ENCODE measurements at regions of chr1 and their contacts with region 1.

Region 1: GRCh38 chr1:155017041-155017945 is 14.7 kb downstream of the ZBTB7B start:
- DNase-seq: peak; percentile 71 to 92 (median 88)
- ATAC-seq: peak; percentile 98
- H3K4me3 ChIP-seq: peak overlapping the region; percentile 31 to 46
- H3K4me3 Mint-ChIP-seq: peak overlapping the region; percentile 59
- H3K27ac ChIP-seq: no peak overlapping the region
- H3K27ac Mint-ChIP-seq: no peak overlapping the region
- H3K4me1 ChIP-seq: peaks cover 55% of the 10 kb centered on the region
- H3K4me1 Mint-ChIP-seq: peaks cover 44% of the 10 kb centered on the region
- H3K27me3 ChIP-seq: no peaks in the 10 kb centered on the region
- H3K27me3 Mint-ChIP-seq: no peaks in the 10 kb centered on the region
- CTCF ChIP-seq: peak; percentile 99

Region 2: GRCh38 chr1:154669464-154670282 is 347.6 kb before region 1 on chr1:
- CTCF ChIA-PET with region 1: interaction called, 3 read pairs
- POLR2A ChIA-PET with region 1: no interaction called
- intact Hi-C with region 1: loop called (anchors 1 to 5 kb)
- DNase-seq: peak; percentile 48 to 86 (median 74)
- ATAC-seq: peak; percentile 100
- H3K4me3 ChIP-seq: no peak overlapping the region
- H3K4me3 Mint-ChIP-seq: no peak overlapping the region
- H3K27ac ChIP-seq: no peak overlapping the region
- H3K27ac Mint-ChIP-seq: no peak overlapping the region
- H3K4me1 ChIP-seq: peaks cover 3% of the 10 kb centered on the region
- H3K4me1 Mint-ChIP-seq: no peaks in the 10 kb centered on the region
- H3K27me3 ChIP-seq: no peaks in the 10 kb centered on the region
- H3K27me3 Mint-ChIP-seq: no peaks in the 10 kb centered on the region
- CTCF ChIP-seq: peak; percentile 80

Region 3: DNA sequence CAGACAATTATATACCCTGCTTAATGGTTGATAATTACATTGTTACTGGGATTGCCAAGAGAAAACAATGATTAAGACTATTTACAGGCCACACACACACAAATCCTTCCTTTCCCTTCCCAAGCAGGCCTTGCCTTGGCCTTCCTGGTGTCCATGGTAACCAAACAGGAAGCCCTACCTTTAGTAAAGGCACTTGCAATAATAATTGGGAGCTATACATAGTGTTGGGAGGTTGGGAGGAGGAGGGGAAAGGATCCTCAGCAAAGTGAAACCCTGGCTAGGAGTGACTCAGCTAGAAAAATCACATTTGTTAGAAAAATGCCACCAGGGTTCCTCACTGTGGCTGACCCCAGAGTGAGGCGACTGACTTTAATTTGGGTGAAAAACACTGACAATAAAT is 287.0 kb before region 1 on chr1:
- CTCF ChIA-PET with region 1: no interaction called
- POLR2A ChIA-PET with region 1: no interaction called
- intact Hi-C with region 1: no loop called
- DNase-seq: no peak
- ATAC-seq: no peak
- H3K4me3 ChIP-seq: no peak overlapping the region
- H3K4me3 Mint-ChIP-seq: no peak overlapping the region
- H3K27ac ChIP-seq: no peak overlapping the region
- H3K27ac Mint-ChIP-seq: no peak overlapping the region
- H3K4me1 ChIP-seq: no peaks in the 10 kb centered on the region
- H3K4me1 Mint-ChIP-seq: no peaks in the 10 kb centered on the region
- H3K27me3 ChIP-seq: no peaks in the 10 kb centered on the region
- H3K27me3 Mint-ChIP-seq: peaks cover 7% of the 10 kb centered on the region
- CTCF ChIP-seq: no peak

Region 4: DNA sequence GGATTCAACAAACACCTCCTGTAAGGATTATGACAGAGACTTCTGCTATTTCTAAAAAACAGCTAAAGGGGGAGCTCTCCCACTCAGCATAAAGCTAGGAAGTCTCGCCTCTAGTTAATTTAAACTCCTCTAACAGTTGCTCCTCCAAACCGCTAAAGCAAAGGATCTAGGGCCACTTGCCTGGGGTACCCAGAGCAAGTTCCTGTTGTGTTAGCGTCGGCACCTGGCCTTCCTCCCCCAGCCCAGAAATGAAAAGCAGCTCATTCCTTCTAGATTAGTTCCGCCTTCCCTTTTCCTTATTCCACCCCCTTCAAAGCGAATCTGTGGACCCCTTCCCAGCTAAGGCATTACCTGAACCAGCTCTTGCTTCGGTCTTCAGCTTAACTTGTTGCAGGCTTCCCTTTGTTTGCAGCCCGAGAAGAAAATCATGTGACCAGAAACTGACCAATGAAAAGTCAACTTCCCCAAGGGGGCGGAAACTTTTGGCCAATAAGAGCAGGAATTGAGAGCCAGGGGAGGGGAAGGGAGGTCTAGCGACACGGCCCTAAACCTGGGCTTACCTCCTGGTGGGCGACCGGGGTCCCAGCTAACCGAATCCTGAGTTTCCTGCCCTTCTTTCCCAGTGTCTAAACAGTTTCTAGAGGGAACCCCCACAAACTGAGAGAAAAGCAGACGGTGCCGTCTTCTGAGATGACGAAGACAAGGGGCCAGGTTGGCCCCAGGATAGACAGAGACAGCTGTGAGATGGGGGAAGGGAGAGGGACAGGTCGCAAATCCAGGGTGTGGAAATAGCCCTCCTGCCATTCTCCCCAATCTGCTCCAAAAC is 61.4 kb before region 1 on chr1 and contains the start of gene PBXIP1:
- CTCF ChIA-PET with region 1: interaction called, 109 read pairs
- POLR2A ChIA-PET with region 1: interaction called, 24 read pairs
- intact Hi-C with region 1: loop called in 1 of 2 experiments (anchors 1 kb)
- DNase-seq: peak; percentile 65 to 96 (median 84)
- ATAC-seq: peak; percentile 40
- H3K4me3 ChIP-seq: peak within 1 kb of the TSS; percentile 71 to 76
- H3K4me3 Mint-ChIP-seq: peak within 1 kb of the TSS; percentile 99
- H3K27ac ChIP-seq: peak within 1 kb of the TSS; percentile 98
- H3K27ac Mint-ChIP-seq: peak within 1 kb of the TSS; percentile 99
- H3K4me1 ChIP-seq: peaks cover 60% of the 10 kb centered on the region
- H3K4me1 Mint-ChIP-seq: peaks cover 76% of the 10 kb centered on the region
- H3K27me3 ChIP-seq: no peaks in the 10 kb centered on the region
- H3K27me3 Mint-ChIP-seq: no peaks in the 10 kb centered on the region
- CTCF ChIP-seq: no peak
- total RNA-seq, gene PBXIP1: 315 to 319 TPM

Region 5: DNA sequence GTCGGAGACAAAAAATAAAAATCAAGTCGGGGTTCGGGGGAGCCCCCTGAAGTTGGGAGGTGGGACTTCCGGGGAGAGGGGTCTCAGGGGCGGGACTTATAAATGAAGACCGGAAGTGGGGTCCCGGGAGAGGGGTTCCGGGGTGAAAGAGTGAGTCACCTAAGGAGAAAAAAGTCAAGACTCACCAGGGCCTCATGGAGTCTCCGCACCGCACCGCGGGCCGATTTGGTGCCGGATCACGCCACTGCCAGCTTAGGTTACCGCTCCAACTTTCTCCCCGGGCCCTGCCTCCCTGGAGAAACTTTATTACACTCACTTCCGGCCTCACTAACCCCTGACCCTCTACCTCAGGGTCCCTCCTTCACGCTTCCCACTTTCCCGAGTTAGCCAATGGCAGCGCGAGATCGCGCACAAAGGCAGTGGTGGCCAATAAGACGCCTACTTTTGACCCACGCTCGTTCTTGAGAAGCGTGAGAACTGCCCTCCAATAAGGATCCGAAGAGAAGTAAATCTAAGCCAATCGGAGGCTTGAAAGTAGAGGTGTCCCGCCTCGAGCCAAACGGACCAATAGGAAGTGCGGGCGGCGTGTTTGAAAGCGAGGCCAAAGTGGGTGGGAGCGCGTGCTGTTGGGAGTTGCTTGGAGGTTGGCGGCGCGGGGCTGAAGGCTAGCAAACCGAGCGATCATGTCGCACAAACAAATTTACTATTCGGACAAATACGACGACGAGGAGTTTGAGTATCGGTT is 43.1 kb before region 1 on chr1 and contains the start of gene CKS1B:
- CTCF ChIA-PET with region 1: interaction called, 177 read pairs
- POLR2A ChIA-PET with region 1: interaction called, 4 read pairs
- intact Hi-C with region 1: loop called in 1 of 2 experiments (anchors 2 kb)
- DNase-seq: peak; percentile 92 to 99 (median 97)
- ATAC-seq: peak; percentile 86
- H3K4me3 ChIP-seq: peak within 1 kb of the TSS; percentile 67
- H3K4me3 Mint-ChIP-seq: no peak within 1 kb of the TSS
- H3K27ac ChIP-seq: peak within 1 kb of the TSS; percentile 90 to 95
- H3K27ac Mint-ChIP-seq: no peak within 1 kb of the TSS
- H3K4me1 ChIP-seq: peaks cover 23% of the 10 kb centered on the region
- H3K4me1 Mint-ChIP-seq: peaks cover 26% of the 10 kb centered on the region
- H3K27me3 ChIP-seq: no peaks in the 10 kb centered on the region
- H3K27me3 Mint-ChIP-seq: no peaks in the 10 kb centered on the region
- CTCF ChIP-seq: no peak
- total RNA-seq, gene CKS1B: 2.3 to 2.9 TPM

Region 6: GRCh38 chr1:155044812-155045690 is 27.8 kb after region 1 on chr1:
- CTCF ChIA-PET with region 1: interaction called, 14 read pairs
- POLR2A ChIA-PET with region 1: no interaction called
- intact Hi-C with region 1: no loop called
- DNase-seq: peak in 8 of 9 experiments; percentile 42 to 80 (median 64)
- ATAC-seq: peak; percentile 94
- H3K4me3 ChIP-seq: no peak overlapping the region
- H3K4me3 Mint-ChIP-seq: no peak overlapping the region
- H3K27ac ChIP-seq: no peak overlapping the region
- H3K27ac Mint-ChIP-seq: no peak overlapping the region
- H3K4me1 ChIP-seq: no peaks in the 10 kb centered on the region
- H3K4me1 Mint-ChIP-seq: peaks cover 4% of the 10 kb centered on the region
- H3K27me3 ChIP-seq: no peaks in the 10 kb centered on the region
- H3K27me3 Mint-ChIP-seq: peaks cover 3% of the 10 kb centered on the region
- CTCF ChIP-seq: peak; percentile 64

Measured in CD8-positive, alpha-beta T cell (primary cell).